ENCODE measurements at regions of chr9 and their contacts with region 1.

Region 1: GRCh38 chr9:109469646-109470358 is 28.3 kb downstream of the PTPN3 start:
- DNase-seq: peak; percentile 91
- H3K4me3 Mint-ChIP-seq: no peak overlapping the region
- H3K27ac Mint-ChIP-seq: peak overlapping the region; percentile 50
- H3K4me1 Mint-ChIP-seq: peaks cover 29% of the 10 kb centered on the region
- H3K27me3 Mint-ChIP-seq: peaks cover 20% of the 10 kb centered on the region

Region 2: GRCh38 chr9:109182940-109183798 is 286.6 kb before region 1 on chr9:
- intact Hi-C with region 1: loop called (anchors 10 kb)
- DNase-seq: peak; percentile 68
- H3K4me3 Mint-ChIP-seq: no peak overlapping the region
- H3K27ac Mint-ChIP-seq: no peak overlapping the region
- H3K4me1 Mint-ChIP-seq: peaks cover 13% of the 10 kb centered on the region
- H3K27me3 Mint-ChIP-seq: peaks cover 28% of the 10 kb centered on the region

Region 3: GRCh38 chr9:109320742-109321448 is 148.9 kb before region 1 on chr9 and contains the start of gene EPB41L4B:
- intact Hi-C with region 1: loop called (anchors 5 kb)
- DNase-seq: peak; percentile 97
- H3K4me3 Mint-ChIP-seq: peak within 1 kb of the TSS; percentile 81
- H3K27ac Mint-ChIP-seq: peak within 1 kb of the TSS; percentile 66
- H3K4me1 Mint-ChIP-seq: peaks cover 10% of the 10 kb centered on the region
- H3K27me3 Mint-ChIP-seq: peaks cover 68% of the 10 kb centered on the region
- total RNA-seq, gene EPB41L4B: 1.2 and 1.5 TPM in 2 replicates

Region 4: GRCh38 chr9:109418827-109419226 is 51.0 kb before region 1 on chr9:
- intact Hi-C with region 1: loop called (anchors 1 kb)
- DNase-seq: no peak
- H3K4me3 Mint-ChIP-seq: peak overlapping the region; percentile 15
- H3K27ac Mint-ChIP-seq: peak overlapping the region; percentile 79
- H3K4me1 Mint-ChIP-seq: peaks cover 37% of the 10 kb centered on the region
- H3K27me3 Mint-ChIP-seq: peaks cover 1% of the 10 kb centered on the region

Measured in activated CD4-positive, alpha-beta T cell treated with anti-CD3 and anti-CD28 coated beads, Interleukin-2, amount 10 ng/mL, durations not matched to agents 24 days and 14 days (primary cell).